T-cell (primary cell): ENCODE measurements at regions of chr11 and their contacts with region 1.

Region 1: DNA sequence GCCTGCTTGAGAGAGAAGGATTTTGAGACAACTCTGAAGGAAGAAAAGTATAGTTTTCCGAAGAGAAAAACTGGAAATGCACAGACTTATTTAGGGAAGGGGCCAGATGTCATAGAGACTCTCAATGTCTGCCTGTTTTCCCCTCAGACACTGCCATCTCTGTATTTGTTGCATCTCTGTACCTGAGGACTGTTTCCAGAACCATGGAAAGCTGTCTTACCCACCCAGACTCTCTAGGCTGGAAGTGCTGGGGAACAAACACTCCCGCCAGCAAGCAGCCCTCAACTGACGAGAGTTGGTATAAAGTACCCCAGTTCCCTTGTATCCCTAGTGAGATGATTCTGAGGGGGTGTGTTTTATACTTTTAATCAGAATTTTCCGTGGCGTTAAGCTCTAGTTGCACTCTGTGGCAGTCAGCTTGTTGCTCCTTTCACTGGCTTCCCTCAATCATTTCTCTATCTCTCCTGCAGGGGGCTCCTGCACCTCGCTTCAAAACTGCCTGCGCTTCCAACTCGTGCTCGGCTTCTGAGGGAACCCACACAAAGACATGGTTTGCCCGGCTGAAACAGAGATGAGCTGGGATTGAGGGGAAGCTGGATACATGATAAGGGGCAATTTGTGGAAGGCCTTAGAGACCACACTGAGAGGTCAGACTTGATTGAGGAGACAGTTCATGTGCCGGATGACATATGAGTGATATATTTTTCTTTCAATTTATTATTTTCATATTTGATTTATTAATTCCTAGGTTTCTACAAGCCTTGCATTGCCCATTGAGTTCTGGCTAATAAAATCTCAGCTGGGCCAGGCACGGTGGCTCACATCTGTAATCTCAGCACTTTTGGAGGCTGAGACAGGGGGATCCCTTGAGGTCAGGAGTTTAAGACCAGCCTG is 36.9 kb upstream of the CLPB start:
- DNase-seq: peak; percentile 19 to 78 (median 46)
- ATAC-seq: peak; percentile 67 to 80 (median 79)
- H3K4me3 ChIP-seq: no peak overlapping the region
- H3K4me3 Mint-ChIP-seq: peak overlapping the region in 2 of 3 donors; percentile 18 to 22
- H3K27ac ChIP-seq: no peak overlapping the region
- H3K27ac Mint-ChIP-seq: no peak overlapping the region
- H3K4me1 ChIP-seq: peaks cover 0 to 8% of the 10 kb centered on the region in 2 experiments
- H3K4me1 Mint-ChIP-seq: peaks cover 2 to 6% (median 4%) of the 10 kb centered on the region in 3 donors
- H3K27me3 ChIP-seq: peaks cover 3 to 27% of the 10 kb centered on the region in 2 experiments
- H3K27me3 Mint-ChIP-seq: peaks cover 33 to 34% of the 10 kb centered on the region in 2 donors

Region 2: GRCh38 chr11:72179804-72180396 is 291.4 kb before region 1 on chr11:
- CTCF ChIA-PET with region 1: no interaction called
- POLR2A ChIA-PET with region 1: no interaction called
- DNase-seq: no peak
- ATAC-seq: no peak
- H3K4me3 ChIP-seq: no peak overlapping the region
- H3K4me3 Mint-ChIP-seq: no peak overlapping the region
- H3K27ac ChIP-seq: no peak overlapping the region
- H3K27ac Mint-ChIP-seq: no peak overlapping the region
- H3K4me1 ChIP-seq: peaks cover 0 to 2% of the 10 kb centered on the region in 2 experiments
- H3K4me1 Mint-ChIP-seq: peaks cover 2 to 6% (median 5%) of the 10 kb centered on the region in 3 donors
- H3K27me3 ChIP-seq: peaks cover 0 to 14% of the 10 kb centered on the region in 2 experiments
- H3K27me3 Mint-ChIP-seq: peaks cover 11 to 21% of the 10 kb centered on the region in 2 donors

Region 3: DNA sequence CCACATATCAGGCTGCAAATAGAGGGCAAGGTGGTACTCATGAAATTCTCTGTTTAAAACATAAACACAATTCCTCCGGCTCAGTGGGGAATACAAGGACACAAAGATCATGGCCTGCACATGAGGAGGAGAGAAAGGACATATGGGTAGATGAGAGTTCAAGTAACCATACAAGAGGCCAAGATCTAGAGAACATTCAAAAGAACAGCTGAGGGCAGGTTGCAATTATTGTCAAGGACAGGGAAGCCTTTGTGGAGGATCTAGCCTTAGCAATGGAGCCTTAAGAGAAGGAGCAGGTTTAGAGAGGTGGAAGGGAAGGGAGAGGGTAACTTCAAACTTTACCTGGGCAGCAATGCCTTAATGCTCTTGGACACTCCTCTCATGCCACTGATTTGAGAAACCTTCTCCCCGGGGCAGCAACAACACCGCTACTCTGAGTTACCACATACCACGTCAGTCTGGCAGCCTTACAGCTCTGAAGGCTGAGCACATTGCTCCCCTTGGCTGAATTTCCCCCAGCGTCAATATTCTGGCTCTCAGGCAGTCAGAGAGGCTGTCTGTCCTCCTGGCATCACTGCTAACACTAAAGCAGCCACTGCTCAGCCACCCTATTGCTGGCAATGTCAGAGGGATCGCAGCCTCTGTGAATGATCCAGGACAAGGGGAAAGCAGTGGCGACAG is 92.4 kb before region 1 on chr11:
- CTCF ChIA-PET with region 1: no interaction called
- POLR2A ChIA-PET with region 1: no interaction called
- DNase-seq: no peak
- ATAC-seq: no peak
- H3K4me3 ChIP-seq: no peak overlapping the region
- H3K4me3 Mint-ChIP-seq: no peak overlapping the region
- H3K27ac ChIP-seq: no peak overlapping the region
- H3K27ac Mint-ChIP-seq: no peak overlapping the region
- H3K4me1 ChIP-seq: no peaks in the 10 kb centered on the region
- H3K4me1 Mint-ChIP-seq: no peaks in the 10 kb centered on the region
- H3K27me3 ChIP-seq: no peaks in the 10 kb centered on the region
- H3K27me3 Mint-ChIP-seq: no peaks in the 10 kb centered on the region

Region 4: GRCh38 chr11:72553706-72554105 is 82.5 kb after region 1 on chr11:
- CTCF ChIA-PET with region 1: interaction called in 1 of 2 experiments, 15 read pairs
- POLR2A ChIA-PET with region 1: no interaction called
- DNase-seq: peak in 21 of 35 experiments; percentile 2 to 61 (median 12)
- ATAC-seq: peak in 3 of 4 experiments; percentile 38 to 52 (median 49)
- H3K4me3 ChIP-seq: no peak overlapping the region
- H3K4me3 Mint-ChIP-seq: no peak overlapping the region
- H3K27ac ChIP-seq: no peak overlapping the region
- H3K27ac Mint-ChIP-seq: no peak overlapping the region
- H3K4me1 ChIP-seq: peaks cover 0 to 8% of the 10 kb centered on the region in 2 experiments
- H3K4me1 Mint-ChIP-seq: peaks cover 6 to 8% (median 7%) of the 10 kb centered on the region in 3 donors
- H3K27me3 ChIP-seq: peaks cover 0 to 10% of the 10 kb centered on the region in 2 experiments
- H3K27me3 Mint-ChIP-seq: peaks cover 0 to 3% of the 10 kb centered on the region in 2 donors

Region 5: DNA sequence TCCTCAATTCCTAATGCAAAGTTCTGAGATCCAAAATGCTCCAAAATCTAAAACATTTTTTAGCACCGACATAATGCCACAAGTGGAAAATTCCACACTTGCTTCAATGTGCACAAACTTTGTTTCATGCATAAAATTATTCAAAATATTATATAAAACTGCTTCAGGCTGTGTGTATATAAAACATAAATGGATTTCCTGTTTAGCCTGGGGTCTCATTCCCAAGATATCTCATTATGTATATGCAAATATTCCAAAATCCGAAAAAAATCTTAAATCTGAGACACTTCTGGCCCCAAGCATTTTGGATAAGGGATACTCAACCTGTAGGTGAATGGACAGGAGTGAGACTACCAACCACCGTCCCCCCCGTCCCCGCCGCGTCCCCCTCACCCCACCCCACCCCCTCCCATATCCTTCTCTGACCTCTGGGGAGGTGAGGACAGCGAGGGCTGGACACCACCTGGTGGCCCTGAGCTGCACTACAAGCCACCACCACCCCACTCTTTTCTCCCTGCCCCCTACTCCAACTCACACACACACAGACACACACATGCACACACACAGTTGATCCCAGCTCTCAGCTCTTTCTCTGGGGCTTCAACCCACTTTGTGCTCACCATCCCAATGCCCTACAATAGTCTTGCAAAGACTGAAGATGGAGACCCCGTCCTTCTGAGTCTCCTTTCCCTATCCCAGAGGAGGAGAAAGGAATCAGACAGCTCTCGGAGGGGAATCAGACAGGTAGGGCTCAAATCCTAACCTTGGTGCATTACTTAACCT is 102.0 kb after region 1 on chr11:
- CTCF ChIA-PET with region 1: interaction called, 5 to 18 read pairs
- POLR2A ChIA-PET with region 1: no interaction called
- DNase-seq: peak in 8 of 35 experiments; percentile 10 to 56 (median 23)
- ATAC-seq: peak; percentile 50 to 67 (median 58)
- H3K4me3 ChIP-seq: no peak overlapping the region
- H3K4me3 Mint-ChIP-seq: no peak overlapping the region
- H3K27ac ChIP-seq: no peak overlapping the region
- H3K27ac Mint-ChIP-seq: no peak overlapping the region
- H3K4me1 ChIP-seq: peaks cover 0 to 11% of the 10 kb centered on the region in 2 experiments
- H3K4me1 Mint-ChIP-seq: peaks cover 7 to 20% (median 12%) of the 10 kb centered on the region in 3 donors
- H3K27me3 ChIP-seq: peaks cover 0 to 39% of the 10 kb centered on the region in 2 experiments
- H3K27me3 Mint-ChIP-seq: peaks cover 21% of the 10 kb centered on the region in 2 donors

Region 6: DNA sequence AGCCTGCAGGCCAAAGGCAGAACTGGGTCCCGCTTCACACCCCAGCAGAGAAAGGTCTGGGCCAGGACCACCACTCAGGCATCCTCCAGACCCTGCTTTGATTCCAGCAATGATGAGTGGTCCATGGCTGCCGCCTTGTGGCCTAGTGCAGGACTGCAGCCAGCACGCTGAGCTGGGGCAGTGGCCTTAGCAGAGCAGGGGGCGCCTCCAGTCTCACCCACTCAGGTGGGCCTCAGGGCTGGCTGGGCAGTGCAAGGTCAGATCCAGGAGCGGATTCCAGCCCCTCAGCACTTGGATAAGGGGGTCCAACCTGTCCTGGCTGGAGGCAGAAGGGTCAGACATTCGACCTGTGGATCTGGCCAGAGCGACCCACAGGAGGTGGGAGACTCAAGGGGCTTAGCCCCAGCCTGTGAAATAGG is 212.5 kb after region 1 on chr11:
- CTCF ChIA-PET with region 1: interaction called, 8 to 10 read pairs
- POLR2A ChIA-PET with region 1: no interaction called
- DNase-seq: peak; percentile 17 to 74 (median 55)
- ATAC-seq: peak; percentile 64 to 81 (median 70)
- H3K4me3 ChIP-seq: no peak overlapping the region
- H3K4me3 Mint-ChIP-seq: no peak overlapping the region
- H3K27ac ChIP-seq: no peak overlapping the region
- H3K27ac Mint-ChIP-seq: peak overlapping the region; percentile 31 to 52
- H3K4me1 ChIP-seq: peaks cover 0 to 7% of the 10 kb centered on the region in 2 experiments
- H3K4me1 Mint-ChIP-seq: peaks cover 14 to 29% (median 14%) of the 10 kb centered on the region in 3 donors
- H3K27me3 ChIP-seq: peaks cover 0 to under 1% of the 10 kb centered on the region in 2 experiments
- H3K27me3 Mint-ChIP-seq: no peaks in the 10 kb centered on the region